ENCODE measurements at regions of chr11 and their contacts with region 1.

Region 1: GRCh38 chr11:66159324-66159984 is 89.4 kb downstream of the PACS1 start:
- DNase-seq: no peak
- H3K4me3 ChIP-seq: no peak overlapping the region
- H3K27ac ChIP-seq: no peak overlapping the region
- H3K4me1 ChIP-seq: peaks cover 9% of the 10 kb centered on the region
- H3K27me3 ChIP-seq: no peaks in the 10 kb centered on the region
- CTCF ChIP-seq: no peak

Region 2: DNA sequence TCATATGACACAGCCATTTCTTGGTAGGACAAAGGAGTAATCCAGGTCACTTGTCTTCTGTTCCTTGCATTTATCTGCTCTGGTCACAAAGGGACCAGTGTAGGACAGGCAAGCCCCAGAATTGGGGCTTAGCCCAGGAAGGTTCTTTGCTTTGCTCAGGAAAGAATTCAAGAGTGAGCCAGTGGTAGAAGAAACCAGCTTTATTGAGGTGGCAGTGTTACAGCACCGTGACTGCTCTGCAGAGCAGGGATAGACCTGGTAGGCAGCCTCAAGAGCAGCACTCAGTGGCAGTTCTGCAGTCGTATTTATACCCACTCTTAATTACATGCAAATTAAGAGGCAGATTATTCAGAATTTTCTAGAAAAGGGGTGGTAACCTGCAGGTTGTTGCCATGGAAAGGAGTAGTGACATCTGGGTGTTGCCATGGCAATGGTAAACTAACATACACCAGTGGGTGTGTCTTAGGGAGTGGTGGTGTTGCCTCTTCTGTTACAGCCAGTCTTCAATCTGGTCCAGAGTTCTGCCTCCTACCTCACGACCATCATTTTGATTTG is 24.1 kb after region 1 on chr11:
- CTCF ChIA-PET with region 1: no interaction called
- POLR2A ChIA-PET with region 1: interaction called, 13 read pairs
- intact Hi-C with region 1: no loop called
- DNase-seq: no peak
- H3K4me3 ChIP-seq: no peak overlapping the region
- H3K27ac ChIP-seq: no peak overlapping the region
- H3K4me1 ChIP-seq: peaks cover 4% of the 10 kb centered on the region
- H3K27me3 ChIP-seq: no peaks in the 10 kb centered on the region
- CTCF ChIP-seq: no peak

Region 3: GRCh38 chr11:66312549-66313320 is 153.3 kb after region 1 on chr11:
- CTCF ChIA-PET with region 1: no interaction called
- POLR2A ChIA-PET with region 1: no interaction called
- intact Hi-C with region 1: no loop called
- DNase-seq: peak; percentile 93 to 99
- H3K4me3 ChIP-seq: peak overlapping the region; percentile 66
- H3K27ac ChIP-seq: peak overlapping the region; percentile 45; the same call in 1 of the 2 replicates
- H3K4me1 ChIP-seq: peaks cover 6% of the 10 kb centered on the region
- H3K27me3 ChIP-seq: peaks cover 12% of the 10 kb centered on the region
- CTCF ChIP-seq: no peak

Measured in PC-9 (cell line).